ENCODE measurements at regions of chr19 and their contacts with region 1.

Region 1: GRCh38 chr19:28324275-28325060 is 888.5 kb downstream of the UQCRFS1 start:
- DNase-seq: no peak
- H3K27ac ChIP-seq: no peak overlapping the region
- CTCF ChIP-seq: no peak

Region 2: GRCh38 chr19:27974082-27974513 is 350.4 kb before region 1 on chr19:
- CTCF ChIA-PET with region 1: interaction called, 13 read pairs
- POLR2A ChIA-PET with region 1: no interaction called
- DNase-seq: no peak
- H3K27ac ChIP-seq: no peak overlapping the region
- CTCF ChIP-seq: no peak; the same call in 1 of the 2 replicates

Region 3: DNA sequence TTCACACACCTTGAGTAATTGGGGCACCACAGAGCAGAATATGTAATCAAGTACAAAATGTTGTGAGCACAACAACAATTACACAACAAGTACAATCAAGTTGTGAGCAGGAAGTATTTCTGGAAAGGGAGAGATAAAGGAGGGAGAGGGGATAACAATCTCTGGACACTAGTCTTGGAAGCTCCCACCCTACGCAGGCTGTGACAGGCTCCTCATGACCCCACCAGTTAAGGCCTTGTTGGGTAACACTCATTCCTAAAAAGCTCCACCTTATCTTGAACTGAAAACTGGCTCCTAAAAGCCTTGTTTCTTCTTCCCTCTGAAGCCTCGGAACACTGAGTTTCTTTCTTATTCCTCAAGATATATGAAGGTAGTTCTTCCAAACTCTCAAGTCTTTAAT is 82.5 kb after region 1 on chr19:
- CTCF ChIA-PET with region 1: no interaction called
- POLR2A ChIA-PET with region 1: no interaction called
- DNase-seq: no peak
- H3K27ac ChIP-seq: no peak overlapping the region
- CTCF ChIP-seq: no peak

Measured in RWPE1 (cell line).